Sciatic nerve (tissue), 2 donors: ENCODE measurements at regions of chr11 and their contacts with region 1.

Region 1: GRCh38 chr11:102346748-102347461 is at the start of gene BIRC2:
- DNase-seq: peak; percentile 97
- ATAC-seq: peak; percentile 97
- total RNA-seq, gene BIRC2: 66.7 TPM

Region 2: DNA sequence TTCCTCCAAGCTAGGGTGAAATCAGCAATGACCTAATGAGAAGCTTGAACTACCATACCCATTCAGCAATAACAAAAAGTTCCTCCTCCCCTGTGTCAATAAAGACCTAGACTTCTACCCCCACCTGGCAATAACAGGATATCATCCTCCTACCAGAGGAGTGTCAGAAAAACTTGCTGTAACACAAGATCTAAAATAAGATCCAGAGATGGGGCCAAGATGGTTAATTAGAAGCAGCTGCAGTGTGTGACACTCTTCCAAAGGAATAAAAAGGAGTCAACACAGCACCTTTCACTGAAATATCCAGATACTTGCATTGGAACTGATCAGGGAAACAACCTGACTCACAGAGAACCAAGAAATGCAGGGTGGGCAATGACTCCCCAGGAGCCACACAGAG is 1744.2 kb before region 1 on chr11:
- intact Hi-C with region 1: no loop called
- DNase-seq: no peak
- ATAC-seq: peak; percentile 88

Region 3: DNA sequence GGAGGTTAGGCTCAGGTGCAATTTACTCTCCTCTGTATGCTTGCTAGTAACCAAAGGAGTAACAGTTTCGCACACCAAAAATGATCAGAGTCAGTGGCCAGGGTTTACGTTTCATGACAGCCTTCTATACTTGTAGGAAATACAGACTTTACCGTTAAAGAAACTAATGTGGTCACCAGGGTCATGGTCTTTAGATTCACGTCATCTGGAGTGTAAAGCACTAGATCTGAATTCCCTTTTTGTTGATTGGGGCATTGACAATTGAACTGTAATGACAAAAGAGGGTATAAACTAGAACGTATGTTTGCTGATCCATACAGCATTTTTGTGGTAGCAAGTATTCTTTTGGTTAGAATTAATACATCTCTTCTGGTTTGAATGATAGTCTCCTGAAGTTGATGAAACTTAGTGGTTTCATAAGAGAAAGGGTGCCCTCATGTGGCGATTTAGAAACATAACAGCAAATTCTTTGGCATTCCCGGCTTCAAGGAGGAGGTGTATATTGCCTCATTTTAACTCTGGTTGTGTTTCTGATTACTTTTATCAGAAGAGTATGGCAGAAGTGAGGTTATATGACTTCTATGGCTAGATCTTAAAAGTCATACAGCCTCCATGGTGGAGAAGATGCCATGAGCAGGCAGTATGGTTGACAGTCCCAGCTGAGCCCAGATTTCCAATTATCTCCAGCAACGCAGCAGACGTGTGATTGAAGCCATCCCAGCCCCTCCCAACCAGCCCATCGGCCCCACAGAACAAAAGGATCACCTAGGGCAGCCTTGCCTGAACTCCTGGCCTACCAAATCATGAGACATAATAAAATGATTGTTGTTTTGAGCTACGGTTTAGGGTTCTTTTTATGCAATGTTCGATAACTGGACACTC is 148.5 kb after region 1 on chr11:
- intact Hi-C with region 1: loop called (anchors 10 kb)
- DNase-seq: no peak
- ATAC-seq: peak; percentile 90